ENCODE measurements at regions of chr2 and their contacts with region 1.

Region 1: DNA sequence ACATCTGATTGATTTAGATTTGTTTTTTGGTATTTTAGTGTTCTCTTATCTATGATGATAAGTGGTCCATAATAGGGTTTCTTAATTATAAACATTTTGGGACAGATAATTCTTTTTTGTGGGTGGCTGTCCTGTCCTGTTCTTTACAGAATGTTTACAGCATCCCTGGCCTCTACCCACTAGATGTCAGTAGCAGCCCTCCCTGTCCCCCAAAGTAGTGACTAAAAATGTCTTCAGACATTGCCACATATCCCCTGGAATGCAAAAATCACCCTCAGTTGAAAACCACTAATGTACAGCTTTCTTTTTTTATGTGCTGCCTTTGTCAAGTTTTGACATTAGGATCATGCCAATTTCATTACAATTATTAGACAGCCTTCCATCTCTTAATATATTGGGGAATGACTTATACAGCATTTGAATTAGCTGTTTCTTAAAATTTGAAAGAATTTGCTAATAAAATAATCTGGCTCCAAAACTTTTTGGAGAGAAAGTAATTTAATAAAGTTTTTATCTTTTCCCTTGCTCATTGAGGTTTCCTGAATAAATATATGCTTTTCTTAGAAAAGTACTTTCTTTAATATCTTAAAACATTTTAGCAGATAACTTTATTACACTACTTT is 19.5 kb downstream of the WIPF1 start:
- DNase-seq: peak; percentile 84
- H3K4me3 Mint-ChIP-seq: no peak overlapping the region
- H3K27ac Mint-ChIP-seq: no peak overlapping the region
- H3K4me1 Mint-ChIP-seq: peaks cover 51% of the 10 kb centered on the region
- H3K27me3 Mint-ChIP-seq: no peaks in the 10 kb centered on the region

Region 2: GRCh38 chr2:174593574-174594203 is 15.6 kb after region 1 on chr2:
- intact Hi-C with region 1: loop called (anchors 2 kb)
- DNase-seq: peak; percentile 92
- H3K4me3 Mint-ChIP-seq: peak overlapping the region; percentile 86
- H3K27ac Mint-ChIP-seq: peak overlapping the region; percentile 98
- H3K4me1 Mint-ChIP-seq: peaks cover 53% of the 10 kb centered on the region
- H3K27me3 Mint-ChIP-seq: no peaks in the 10 kb centered on the region

Region 3: DNA sequence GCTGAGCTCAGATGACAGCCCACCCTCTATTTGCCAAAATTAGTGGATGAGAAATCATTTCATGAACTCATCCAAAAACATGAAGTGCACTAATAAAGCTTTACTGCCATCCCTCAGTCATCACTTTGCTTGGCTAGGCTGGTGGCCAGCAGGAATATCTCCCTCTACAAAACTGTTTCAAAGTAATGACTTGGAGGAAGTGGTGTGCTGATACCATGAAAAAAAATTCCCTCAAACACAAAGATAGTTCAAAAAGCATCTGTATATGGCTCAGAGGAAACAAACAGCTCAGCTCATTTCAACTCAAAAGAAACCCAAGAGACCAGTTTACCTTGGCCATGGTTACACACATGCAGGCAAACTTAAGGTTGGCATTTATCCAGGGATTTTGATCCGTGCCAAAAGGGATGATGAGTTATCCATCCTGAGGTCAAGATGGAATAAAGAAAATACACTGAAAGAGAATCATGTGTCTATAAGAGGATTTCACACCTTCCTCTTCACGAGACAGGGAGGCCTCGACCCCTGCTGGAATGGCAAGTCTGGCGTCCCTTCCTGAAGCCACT is 37.9 kb after region 1 on chr2:
- intact Hi-C with region 1: loop called (anchors 1 kb)
- DNase-seq: peak; percentile 73
- H3K4me3 Mint-ChIP-seq: peak overlapping the region; percentile 49
- H3K27ac Mint-ChIP-seq: peak overlapping the region; percentile 90
- H3K4me1 Mint-ChIP-seq: peaks cover 72% of the 10 kb centered on the region
- H3K27me3 Mint-ChIP-seq: no peaks in the 10 kb centered on the region

Region 4: GRCh38 chr2:174628528-174629169 is 50.6 kb after region 1 on chr2:
- intact Hi-C with region 1: no loop called
- DNase-seq: peak; percentile 53
- H3K4me3 Mint-ChIP-seq: peak overlapping the region; percentile 32
- H3K27ac Mint-ChIP-seq: peak overlapping the region; percentile 43
- H3K4me1 Mint-ChIP-seq: peaks cover 79% of the 10 kb centered on the region
- H3K27me3 Mint-ChIP-seq: no peaks in the 10 kb centered on the region

Region 5: DNA sequence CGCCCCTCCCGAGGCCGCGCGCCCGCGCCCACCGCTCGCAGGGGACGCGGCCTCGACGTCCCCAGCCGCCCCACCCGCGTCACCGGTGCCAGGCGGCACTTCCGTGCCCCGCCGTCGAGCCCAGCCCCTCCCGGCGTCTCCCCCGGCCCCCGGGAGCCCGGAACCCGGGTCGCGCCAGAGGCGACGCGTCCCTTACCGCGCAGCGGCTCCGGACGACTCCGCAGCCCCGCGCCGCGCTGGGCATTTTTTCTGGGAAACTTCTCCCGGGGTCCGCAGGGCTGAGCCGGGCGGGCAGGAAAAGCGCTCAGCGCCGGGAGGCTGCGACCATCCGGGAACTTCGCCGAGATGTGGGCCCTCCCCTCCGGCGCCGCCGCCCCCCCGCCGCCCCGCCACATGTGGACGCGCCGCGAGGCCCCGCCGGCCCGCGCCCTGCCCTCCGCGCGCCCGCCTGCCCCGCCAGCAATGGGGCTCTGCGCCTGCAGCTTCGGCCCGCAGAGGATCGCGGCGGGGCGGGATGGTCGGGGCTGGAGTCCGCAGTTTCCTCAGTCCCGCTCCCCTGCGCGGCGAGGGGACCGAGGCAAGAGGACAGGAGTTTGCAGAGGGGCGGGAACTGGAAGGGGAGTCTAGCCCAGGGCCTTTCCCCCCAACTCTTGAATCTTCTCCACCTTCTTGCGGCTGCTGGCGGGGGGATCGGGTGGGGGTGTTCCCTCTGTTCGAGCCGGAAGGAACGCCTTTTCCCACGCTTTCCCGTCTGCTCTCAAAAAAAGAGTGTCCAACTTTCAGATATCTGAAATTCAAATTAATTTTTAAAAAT is 104.7 kb after region 1 on chr2:
- intact Hi-C with region 1: loop called (anchors 1 kb)
- DNase-seq: peak; percentile 89
- H3K4me3 Mint-ChIP-seq: peak overlapping the region; percentile 92
- H3K27ac Mint-ChIP-seq: peak overlapping the region; percentile 97
- H3K4me1 Mint-ChIP-seq: peaks cover 50% of the 10 kb centered on the region
- H3K27me3 Mint-ChIP-seq: no peaks in the 10 kb centered on the region

Region 6: DNA sequence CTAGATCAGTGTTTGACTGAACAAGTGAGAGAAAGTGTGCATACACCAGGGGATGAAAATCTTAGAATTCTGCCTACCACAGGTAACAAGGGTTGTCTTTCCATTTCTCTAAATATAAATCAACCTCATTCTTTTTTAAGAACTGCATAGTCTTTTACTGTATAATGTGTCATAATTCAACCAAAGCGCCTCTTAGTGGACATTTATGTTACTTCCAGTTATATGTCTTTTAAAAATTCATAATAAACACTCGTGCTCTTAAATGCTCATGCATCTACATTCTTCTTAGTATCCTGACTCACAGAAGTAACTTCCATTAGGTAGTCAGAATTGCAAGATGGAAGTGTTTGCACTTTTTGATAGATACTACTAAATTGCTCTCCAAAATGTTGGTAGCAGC is 110.0 kb after region 1 on chr2:
- intact Hi-C with region 1: loop called (anchors 1 kb)
- DNase-seq: no peak
- H3K4me3 Mint-ChIP-seq: no peak overlapping the region
- H3K27ac Mint-ChIP-seq: no peak overlapping the region
- H3K4me1 Mint-ChIP-seq: peaks cover 30% of the 10 kb centered on the region
- H3K27me3 Mint-ChIP-seq: no peaks in the 10 kb centered on the region

Region 7: GRCh38 chr2:175004980-175005732 is 427.1 kb after region 1 on chr2 and contains the start of gene CHN1:
- intact Hi-C with region 1: loop called (anchors 10 kb)
- DNase-seq: peak; percentile 87
- H3K4me3 Mint-ChIP-seq: peak within 1 kb of the TSS; percentile 84
- H3K27ac Mint-ChIP-seq: no peak within 1 kb of the TSS
- H3K4me1 Mint-ChIP-seq: peaks cover 3% of the 10 kb centered on the region
- H3K27me3 Mint-ChIP-seq: peaks cover 64% of the 10 kb centered on the region
- total RNA-seq, gene CHN1: 3.1 and 5.1 TPM in 2 replicates